CD4-positive, alpha-beta memory T cell (primary cell): ENCODE measurements at regions of chr10 and their contacts with region 1.

Region 1: GRCh38 chr10:22714479-22715289 is at the start of gene PIP4K2A:
- DNase-seq: peak; percentile 71 to 84 (median 81)
- H3K4me3 ChIP-seq: peak within 1 kb of the TSS; percentile 77 to 79
- H3K4me3 Mint-ChIP-seq: peak within 1 kb of the TSS; percentile 87 to 98 (median 96)
- H3K27ac ChIP-seq: peak within 1 kb of the TSS; percentile 88
- H3K27ac Mint-ChIP-seq: peak within 1 kb of the TSS; percentile 88 to 96 (median 92)
- H3K4me1 ChIP-seq: peaks cover 34% of the 10 kb centered on the region
- H3K4me1 Mint-ChIP-seq: peaks cover 28 to 40% (median 31%) of the 10 kb centered on the region in 4 donors
- H3K27me3 ChIP-seq: no peaks in the 10 kb centered on the region
- H3K27me3 Mint-ChIP-seq: no peaks in the 10 kb centered on the region
- total RNA-seq, gene PIP4K2A: 171 to 179 TPM

Region 2: DNA sequence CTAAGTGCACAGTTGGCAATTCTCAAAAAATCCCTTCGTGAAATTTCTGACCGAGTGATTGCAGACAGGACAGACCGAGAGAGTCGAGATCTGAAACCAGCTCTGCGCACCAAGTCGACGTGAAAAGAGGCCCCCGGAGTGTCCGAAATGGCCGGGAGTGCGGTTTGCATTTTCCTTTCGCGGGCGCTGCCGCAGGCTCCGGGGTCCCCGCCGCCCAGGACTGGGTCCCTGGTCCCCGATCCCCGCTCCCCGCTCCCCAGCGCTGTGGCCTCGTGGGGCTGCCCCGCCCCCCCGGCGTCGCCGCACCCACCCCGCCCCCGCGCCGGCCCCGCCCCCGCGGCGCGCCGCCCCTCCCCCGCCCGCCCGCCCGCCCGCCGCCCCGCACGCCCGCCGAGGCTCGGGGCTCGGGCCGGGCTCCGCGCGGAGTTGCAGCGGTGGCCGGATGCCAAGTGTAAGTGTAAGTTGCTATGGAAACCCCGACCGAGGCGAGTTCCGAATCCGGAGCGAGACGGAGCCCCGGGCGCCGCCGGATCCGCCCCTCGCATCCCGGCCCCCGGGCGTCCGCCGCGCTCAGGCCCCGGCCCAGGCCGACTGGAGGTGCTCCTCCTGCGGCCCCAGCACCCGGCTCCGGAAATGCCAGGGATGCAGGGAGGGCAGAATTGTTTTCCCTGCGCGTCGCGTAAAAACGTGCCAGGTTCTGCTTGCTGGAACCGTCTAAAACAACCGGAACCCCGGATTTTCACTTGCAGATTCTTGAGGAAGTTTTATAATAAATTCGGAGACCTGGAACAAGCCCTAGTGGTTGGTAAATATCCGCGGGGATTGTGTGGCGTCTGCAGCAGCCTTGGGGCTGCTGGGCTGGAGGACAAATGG is 389.2 kb before region 1 on chr10:
- CTCF ChIA-PET with region 1: no interaction called
- POLR2A ChIA-PET with region 1: no interaction called
- intact Hi-C with region 1: loop called (anchors 2 kb)
- DNase-seq: peak; percentile 83 to 86 (median 84)
- H3K4me3 ChIP-seq: peak overlapping the region; percentile 40 to 68
- H3K4me3 Mint-ChIP-seq: peak overlapping the region; percentile 85 to 94 (median 88)
- H3K27ac ChIP-seq: peak overlapping the region; percentile 65
- H3K27ac Mint-ChIP-seq: peak overlapping the region; percentile 81 to 97 (median 91)
- H3K4me1 ChIP-seq: peaks cover 39% of the 10 kb centered on the region
- H3K4me1 Mint-ChIP-seq: peaks cover 35 to 44% (median 39%) of the 10 kb centered on the region in 4 donors
- H3K27me3 ChIP-seq: no peaks in the 10 kb centered on the region
- H3K27me3 Mint-ChIP-seq: peaks cover 10 to 13% of the 10 kb centered on the region in 2 donors

Region 3: GRCh38 chr10:22630234-22631174 is 84.2 kb before region 1 on chr10:
- CTCF ChIA-PET with region 1: interaction called, 3 read pairs
- POLR2A ChIA-PET with region 1: interaction called, 22 read pairs
- intact Hi-C with region 1: no loop called
- DNase-seq: peak; percentile 66 to 86 (median 68)
- H3K4me3 ChIP-seq: peak overlapping the region; percentile 8 to 38
- H3K4me3 Mint-ChIP-seq: peak overlapping the region; percentile 78 to 86 (median 80)
- H3K27ac ChIP-seq: peak overlapping the region; percentile 64
- H3K27ac Mint-ChIP-seq: peak overlapping the region; percentile 87 to 99 (median 96)
- H3K4me1 ChIP-seq: peaks cover 99% of the 10 kb centered on the region
- H3K4me1 Mint-ChIP-seq: peaks cover 82 to 98% (median 94%) of the 10 kb centered on the region in 4 donors
- H3K27me3 ChIP-seq: no peaks in the 10 kb centered on the region
- H3K27me3 Mint-ChIP-seq: no peaks in the 10 kb centered on the region

Region 4: GRCh38 chr10:22700489-22700888 is 14.2 kb before region 1 on chr10:
- CTCF ChIA-PET with region 1: interaction called, 7 read pairs
- POLR2A ChIA-PET with region 1: interaction called, 20 read pairs
- intact Hi-C with region 1: loop called (anchors 1 kb)
- DNase-seq: peak in 1 of 5 donors; percentile 29
- H3K4me3 ChIP-seq: no peak overlapping the region
- H3K4me3 Mint-ChIP-seq: peak overlapping the region in 4 of 8 donors; percentile 4 to 66 (median 38)
- H3K27ac ChIP-seq: no peak overlapping the region
- H3K27ac Mint-ChIP-seq: peak overlapping the region; percentile 30 to 90 (median 81)
- H3K4me1 ChIP-seq: peaks cover 99% of the 10 kb centered on the region
- H3K4me1 Mint-ChIP-seq: peaks cover 77 to 93% (median 88%) of the 10 kb centered on the region in 4 donors
- H3K27me3 ChIP-seq: no peaks in the 10 kb centered on the region
- H3K27me3 Mint-ChIP-seq: no peaks in the 10 kb centered on the region